Activated B cell treated with CpG ODN at 0.5 μM for 24 hours (primary cell): ENCODE measurements at regions of chr10 and their contacts with region 1.

Region 1: DNA sequence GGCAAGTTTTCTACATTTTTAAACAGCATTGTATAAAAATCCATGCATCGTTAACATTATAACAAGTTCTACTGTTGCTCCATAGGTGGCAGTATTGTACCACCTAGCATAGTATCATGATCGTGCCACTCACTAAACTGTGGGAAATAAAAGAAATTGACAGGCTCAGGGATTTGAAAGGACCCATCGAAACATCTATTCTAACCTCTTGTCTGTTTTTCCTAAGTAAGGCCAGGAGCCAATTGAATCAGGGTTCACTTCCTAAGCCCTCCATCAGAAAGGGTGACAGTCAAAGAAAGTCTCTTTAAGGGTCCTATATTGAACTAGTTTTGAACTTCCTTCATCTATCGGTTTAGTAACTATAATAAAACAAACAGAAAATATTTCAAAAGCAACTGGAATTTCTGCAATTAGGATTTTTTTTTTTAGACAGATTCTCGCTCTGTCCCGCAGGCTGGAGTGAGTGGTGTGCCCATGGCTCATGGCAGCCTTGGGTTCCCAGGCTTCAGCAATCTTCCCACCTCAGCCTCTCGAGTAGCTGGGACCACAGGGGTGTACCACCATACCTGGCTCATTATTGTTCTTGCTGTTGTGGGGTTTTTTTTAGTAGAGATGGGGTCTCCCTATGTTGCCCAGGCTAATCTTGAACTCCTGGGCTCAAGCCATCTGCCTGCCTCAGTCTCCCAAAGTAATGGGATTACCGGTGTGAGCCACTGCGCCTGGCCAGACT is 9.4 kb downstream of the HACD1 start:
- DNase-seq: no peak
- ATAC-seq: peak; percentile 78
- H3K4me3 Mint-ChIP-seq: no peak overlapping the region
- H3K27ac Mint-ChIP-seq: no peak overlapping the region
- H3K4me1 Mint-ChIP-seq: peaks cover 2% of the 10 kb centered on the region
- H3K27me3 Mint-ChIP-seq: no peaks in the 10 kb centered on the region
- CTCF ChIP-seq: peak; percentile 53

Region 2: DNA sequence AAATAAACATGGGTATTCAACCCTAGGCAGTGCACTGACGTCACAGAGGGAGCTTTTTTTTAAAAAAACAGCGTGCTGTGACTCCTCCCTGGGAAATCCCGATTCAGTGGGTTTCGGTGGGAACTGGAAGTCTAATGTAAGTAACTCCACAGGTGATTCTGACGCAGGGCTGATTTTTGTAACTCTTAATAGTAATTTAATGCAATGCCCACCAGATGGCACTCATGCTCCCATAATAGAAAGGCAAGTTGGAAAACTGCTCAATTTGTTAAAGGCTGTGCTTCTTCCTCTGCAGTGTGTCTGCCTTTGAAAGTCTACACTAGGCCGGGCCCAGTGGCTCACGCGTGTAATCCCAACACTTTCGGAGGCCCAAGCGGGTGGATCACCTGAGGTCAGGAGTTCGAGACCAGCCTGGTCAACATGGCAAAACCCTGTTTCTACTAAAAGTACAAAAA is 779.6 kb before region 1 on chr10:
- CTCF ChIA-PET with region 1: no interaction called
- POLR2A ChIA-PET with region 1: no interaction called
- intact Hi-C with region 1: loop called (anchors 10 kb)
- DNase-seq: peak; percentile 16
- ATAC-seq: peak; percentile 86
- H3K4me3 Mint-ChIP-seq: no peak overlapping the region
- H3K27ac Mint-ChIP-seq: no peak overlapping the region
- H3K4me1 Mint-ChIP-seq: peaks cover 6% of the 10 kb centered on the region
- H3K27me3 Mint-ChIP-seq: no peaks in the 10 kb centered on the region
- CTCF ChIP-seq: no peak

Region 3: DNA sequence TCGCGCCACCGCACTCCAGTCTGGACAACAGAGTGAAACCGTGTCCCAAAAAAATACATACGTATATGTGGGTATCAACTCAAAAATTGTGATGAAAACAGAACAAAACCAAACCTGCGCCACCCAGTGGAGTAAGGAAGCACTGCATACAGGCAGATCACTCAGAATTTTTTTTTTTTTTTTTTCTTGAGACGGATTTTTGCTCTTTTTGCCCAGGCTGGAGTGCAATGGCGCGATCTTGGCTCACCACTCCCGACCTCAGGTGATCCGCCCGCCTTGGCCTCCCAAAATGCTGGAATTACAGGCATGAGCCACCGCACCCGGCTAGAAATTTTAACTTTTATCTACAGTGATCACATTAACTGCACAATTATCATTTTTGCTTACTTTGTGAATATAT is 135.2 kb after region 1 on chr10:
- CTCF ChIA-PET with region 1: interaction called, 12 read pairs
- POLR2A ChIA-PET with region 1: no interaction called
- intact Hi-C with region 1: loop called (anchors 1 kb)
- DNase-seq: peak; percentile 45
- ATAC-seq: peak; percentile 57
- H3K4me3 Mint-ChIP-seq: peak overlapping the region; percentile 24
- H3K27ac Mint-ChIP-seq: no peak overlapping the region
- H3K4me1 Mint-ChIP-seq: peaks cover 5% of the 10 kb centered on the region
- H3K27me3 Mint-ChIP-seq: no peaks in the 10 kb centered on the region
- CTCF ChIP-seq: no peak

Region 4: GRCh38 chr10:17768957-17769356 is 161.2 kb after region 1 on chr10:
- CTCF ChIA-PET with region 1: no interaction called
- POLR2A ChIA-PET with region 1: no interaction called
- intact Hi-C with region 1: no loop called
- DNase-seq: no peak
- ATAC-seq: no peak
- H3K4me3 Mint-ChIP-seq: no peak overlapping the region
- H3K27ac Mint-ChIP-seq: no peak overlapping the region
- H3K4me1 Mint-ChIP-seq: no peaks in the 10 kb centered on the region
- H3K27me3 Mint-ChIP-seq: no peaks in the 10 kb centered on the region
- CTCF ChIP-seq: no peak

Region 5: GRCh38 chr10:18104223-18104872 is 496.6 kb after region 1 on chr10:
- CTCF ChIA-PET with region 1: no interaction called
- POLR2A ChIA-PET with region 1: no interaction called
- intact Hi-C with region 1: loop called (anchors 1 kb)
- DNase-seq: no peak
- ATAC-seq: no peak
- H3K4me3 Mint-ChIP-seq: no peak overlapping the region
- H3K27ac Mint-ChIP-seq: no peak overlapping the region
- H3K4me1 Mint-ChIP-seq: no peaks in the 10 kb centered on the region
- H3K27me3 Mint-ChIP-seq: no peaks in the 10 kb centered on the region
- CTCF ChIP-seq: no peak

Region 6: GRCh38 chr10:18238870-18239485 is 631.2 kb after region 1 on chr10:
- CTCF ChIA-PET with region 1: no interaction called
- POLR2A ChIA-PET with region 1: no interaction called
- intact Hi-C with region 1: loop called (anchors 1 kb)
- DNase-seq: no peak
- ATAC-seq: no peak
- H3K4me3 Mint-ChIP-seq: no peak overlapping the region
- H3K27ac Mint-ChIP-seq: no peak overlapping the region
- H3K4me1 Mint-ChIP-seq: no peaks in the 10 kb centered on the region
- H3K27me3 Mint-ChIP-seq: peaks cover 1% of the 10 kb centered on the region
- CTCF ChIP-seq: no peak